ENCODE measurements at regions of chr6 and their contacts with region 1.

Region 1: GRCh38 chr6:52577022-52577777 is at the start of gene TRAM2:
- DNase-seq: peak; percentile 89
- ATAC-seq: peak; percentile 79
- H3K4me3 ChIP-seq: peak within 1 kb of the TSS; percentile 63 to 88 (median 79)
- H3K4me3 Mint-ChIP-seq: peak within 1 kb of the TSS; percentile 94
- H3K27ac ChIP-seq: peak within 1 kb of the TSS; percentile 66 to 92
- H3K27ac Mint-ChIP-seq: peak within 1 kb of the TSS; percentile 83
- H3K4me1 ChIP-seq: peaks cover 32 to 35% of the 10 kb centered on the region in 2 donors
- H3K4me1 Mint-ChIP-seq: peaks cover 46% of the 10 kb centered on the region
- H3K27me3 ChIP-seq: no peaks in the 10 kb centered on the region
- H3K27me3 Mint-ChIP-seq: no peaks in the 10 kb centered on the region
- CTCF ChIP-seq: no peak
- total RNA-seq, gene TRAM2: 13.3 and 14.0 TPM in 2 replicates

Region 2: GRCh38 chr6:52304983-52305390 is 272.2 kb before region 1 on chr6:
- CTCF ChIA-PET with region 1: no interaction called
- POLR2A ChIA-PET with region 1: no interaction called
- intact Hi-C with region 1: loop called (anchors 1 kb)
- DNase-seq: peak; percentile 73
- ATAC-seq: peak; percentile 44
- H3K4me3 ChIP-seq: peak overlapping the region in 4 of 5 experiments; percentile 0 to 44 (median 20)
- H3K4me3 Mint-ChIP-seq: peak overlapping the region; percentile 80
- H3K27ac ChIP-seq: peak overlapping the region; percentile 92 to 94
- H3K27ac Mint-ChIP-seq: peak overlapping the region; percentile 93
- H3K4me1 ChIP-seq: peaks cover 59 to 65% of the 10 kb centered on the region in 2 donors
- H3K4me1 Mint-ChIP-seq: peaks cover 62% of the 10 kb centered on the region
- H3K27me3 ChIP-seq: no peaks in the 10 kb centered on the region
- H3K27me3 Mint-ChIP-seq: no peaks in the 10 kb centered on the region
- CTCF ChIP-seq: no peak

Region 3: DNA sequence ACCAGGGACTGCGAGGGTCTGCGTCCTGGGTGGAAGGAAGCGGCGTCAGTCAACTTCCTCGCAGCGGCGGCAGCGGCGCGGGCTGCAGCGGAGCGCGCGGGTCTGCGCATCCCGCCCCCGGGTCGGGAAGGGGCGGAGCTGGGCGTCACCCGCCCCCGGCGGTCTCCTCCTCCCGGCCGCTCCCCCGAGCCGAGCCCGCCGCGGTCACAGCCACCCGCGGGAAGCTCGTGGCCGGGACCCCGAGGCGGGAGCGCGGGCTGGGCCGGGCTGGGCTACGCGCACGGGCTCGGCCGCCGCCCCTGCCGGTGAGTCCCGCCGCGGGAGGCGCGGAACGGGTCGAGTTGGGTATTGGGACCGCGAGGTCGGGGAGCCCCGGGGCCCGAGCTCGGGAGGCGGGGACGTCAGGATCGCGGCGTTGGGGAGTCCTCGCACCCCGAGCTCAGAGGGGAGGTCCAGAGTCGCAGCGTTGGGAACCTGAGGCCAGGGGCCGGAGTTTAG is 215.2 kb before region 1 on chr6 and contains the start of gene PAQR8:
- CTCF ChIA-PET with region 1: no interaction called
- POLR2A ChIA-PET with region 1: no interaction called
- intact Hi-C with region 1: loop called (anchors 2 kb)
- DNase-seq: peak; percentile 88
- ATAC-seq: peak; percentile 90
- H3K4me3 ChIP-seq: peak within 1 kb of the TSS; percentile 54 to 100 (median 91)
- H3K4me3 Mint-ChIP-seq: peak within 1 kb of the TSS; percentile 96
- H3K27ac ChIP-seq: peak within 1 kb of the TSS; percentile 76 to 86
- H3K27ac Mint-ChIP-seq: peak within 1 kb of the TSS; percentile 92
- H3K4me1 ChIP-seq: peaks cover 14 to 17% of the 10 kb centered on the region in 2 donors
- H3K4me1 Mint-ChIP-seq: peaks cover 24% of the 10 kb centered on the region
- H3K27me3 ChIP-seq: no peaks in the 10 kb centered on the region
- H3K27me3 Mint-ChIP-seq: no peaks in the 10 kb centered on the region
- CTCF ChIP-seq: peak; percentile 5
- total RNA-seq, gene PAQR8: 8.5 and 8.9 TPM in 2 replicates

Region 4: DNA sequence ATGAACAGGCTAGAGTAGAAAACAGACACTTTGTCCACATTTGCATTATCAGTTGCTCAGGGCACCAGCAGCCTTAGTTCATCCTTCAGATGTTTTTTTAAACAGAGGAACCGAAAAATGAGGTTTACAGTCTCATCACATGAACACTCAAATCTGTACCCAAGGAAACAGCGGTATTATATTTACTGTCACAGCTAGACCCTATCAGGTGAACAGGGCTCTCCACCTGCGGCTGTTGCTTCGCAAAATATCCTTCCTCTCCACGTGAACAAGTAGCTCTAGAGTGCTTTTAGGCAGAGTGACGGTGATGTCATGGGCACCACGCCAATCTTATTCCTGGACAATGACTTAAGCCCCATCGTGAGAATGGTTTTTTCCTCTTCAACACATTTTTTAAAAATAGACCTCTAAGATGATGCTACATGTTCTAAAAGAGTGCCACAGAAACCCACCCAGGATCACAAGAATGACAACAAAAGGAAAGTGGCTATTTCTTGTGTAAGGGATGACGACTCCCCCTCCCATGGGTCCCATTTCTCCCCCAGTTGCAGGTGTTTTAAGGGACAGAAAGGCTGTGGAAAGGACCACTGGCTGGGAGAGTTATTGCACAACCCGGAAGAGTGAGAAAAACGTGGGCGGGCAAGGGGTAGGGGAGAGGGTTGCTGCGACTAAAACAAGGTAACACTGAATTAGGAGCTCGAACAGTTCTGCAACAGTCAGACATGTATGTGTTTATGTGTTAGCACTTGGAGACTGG is 79.4 kb before region 1 on chr6:
- CTCF ChIA-PET with region 1: interaction called, 3 read pairs
- POLR2A ChIA-PET with region 1: interaction called, 3 read pairs
- intact Hi-C with region 1: loop called (anchors 2 kb)
- DNase-seq: peak; percentile 89
- ATAC-seq: peak; percentile 79
- H3K4me3 ChIP-seq: peak overlapping the region in 3 of 5 experiments; percentile 3 to 19 (median 7)
- H3K4me3 Mint-ChIP-seq: peak overlapping the region; percentile 76
- H3K27ac ChIP-seq: peak overlapping the region; percentile 96 to 99
- H3K27ac Mint-ChIP-seq: peak overlapping the region; percentile 96
- H3K4me1 ChIP-seq: peaks cover 43 to 61% of the 10 kb centered on the region in 2 donors
- H3K4me1 Mint-ChIP-seq: peaks cover 66% of the 10 kb centered on the region
- H3K27me3 ChIP-seq: no peaks in the 10 kb centered on the region
- H3K27me3 Mint-ChIP-seq: no peaks in the 10 kb centered on the region
- CTCF ChIP-seq: no peak

Region 5: GRCh38 chr6:52653151-52653550 is 76.0 kb after region 1 on chr6:
- CTCF ChIA-PET with region 1: interaction called, 10 read pairs
- POLR2A ChIA-PET with region 1: no interaction called
- intact Hi-C with region 1: no loop called
- DNase-seq: no peak
- ATAC-seq: no peak
- H3K4me3 ChIP-seq: no peak overlapping the region
- H3K4me3 Mint-ChIP-seq: no peak overlapping the region
- H3K27ac ChIP-seq: no peak overlapping the region
- H3K27ac Mint-ChIP-seq: no peak overlapping the region
- H3K4me1 ChIP-seq: no peaks in the 10 kb centered on the region
- H3K4me1 Mint-ChIP-seq: peaks cover 4% of the 10 kb centered on the region
- H3K27me3 ChIP-seq: peaks cover 0 to 15% (median 5%) of the 10 kb centered on the region in 4 experiments
- H3K27me3 Mint-ChIP-seq: peaks cover 22% of the 10 kb centered on the region
- CTCF ChIP-seq: no peak

Region 6: DNA sequence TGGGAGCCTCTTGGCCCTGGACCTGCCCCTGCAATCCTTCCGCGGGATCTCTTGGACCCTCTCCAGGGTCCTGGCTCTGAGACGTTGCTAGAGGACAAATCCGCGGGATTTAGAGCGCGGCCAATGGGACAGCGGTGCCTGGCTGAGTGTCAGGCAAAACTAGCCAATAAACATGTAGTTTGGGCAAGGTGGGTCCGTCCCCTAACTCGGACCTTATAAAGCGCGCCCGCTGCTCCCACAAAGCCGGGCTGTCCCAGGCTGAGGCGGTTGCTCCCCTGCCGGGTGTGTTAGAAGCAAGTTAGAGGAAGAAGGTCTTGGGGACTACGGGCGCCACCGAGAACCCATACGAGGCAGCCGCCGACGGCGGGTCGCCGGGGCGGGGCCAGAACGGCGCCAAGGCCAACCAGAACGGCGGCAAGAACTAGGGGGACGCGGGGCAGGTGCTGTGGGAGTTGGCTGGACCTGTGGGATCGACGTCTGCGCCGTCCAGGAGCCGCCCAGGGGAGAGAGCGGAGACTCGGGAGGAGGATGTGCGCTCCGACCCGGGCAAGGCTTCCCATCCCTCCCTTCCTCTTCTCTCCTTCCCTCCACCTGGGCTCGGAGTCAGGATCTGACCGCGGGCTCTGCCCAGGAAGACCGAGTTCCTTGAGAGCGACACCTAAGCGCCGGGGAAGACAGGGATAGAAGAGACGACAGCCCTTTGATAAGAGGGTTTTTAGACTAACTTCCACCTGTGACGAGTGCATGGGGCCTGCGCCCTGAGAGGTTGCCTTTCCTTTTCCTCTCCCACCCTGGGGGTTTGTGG is 87.2 kb after region 1 on chr6:
- CTCF ChIA-PET with region 1: interaction called, 6 read pairs
- POLR2A ChIA-PET with region 1: no interaction called
- intact Hi-C with region 1: loop called (anchors 2 kb)
- DNase-seq: peak; percentile 80
- ATAC-seq: peak; percentile 86
- H3K4me3 ChIP-seq: peak overlapping the region; percentile 58 to 83 (median 70)
- H3K4me3 Mint-ChIP-seq: no peak overlapping the region
- H3K27ac ChIP-seq: peak overlapping the region in 1 of 2 donors; percentile 16
- H3K27ac Mint-ChIP-seq: no peak overlapping the region
- H3K4me1 ChIP-seq: peaks cover 18 to 20% of the 10 kb centered on the region in 2 donors
- H3K4me1 Mint-ChIP-seq: peaks cover 12% of the 10 kb centered on the region
- H3K27me3 ChIP-seq: peaks cover 0 to 7% (median 0%) of the 10 kb centered on the region in 4 experiments
- H3K27me3 Mint-ChIP-seq: no peaks in the 10 kb centered on the region
- CTCF ChIP-seq: no peak

Region 7: DNA sequence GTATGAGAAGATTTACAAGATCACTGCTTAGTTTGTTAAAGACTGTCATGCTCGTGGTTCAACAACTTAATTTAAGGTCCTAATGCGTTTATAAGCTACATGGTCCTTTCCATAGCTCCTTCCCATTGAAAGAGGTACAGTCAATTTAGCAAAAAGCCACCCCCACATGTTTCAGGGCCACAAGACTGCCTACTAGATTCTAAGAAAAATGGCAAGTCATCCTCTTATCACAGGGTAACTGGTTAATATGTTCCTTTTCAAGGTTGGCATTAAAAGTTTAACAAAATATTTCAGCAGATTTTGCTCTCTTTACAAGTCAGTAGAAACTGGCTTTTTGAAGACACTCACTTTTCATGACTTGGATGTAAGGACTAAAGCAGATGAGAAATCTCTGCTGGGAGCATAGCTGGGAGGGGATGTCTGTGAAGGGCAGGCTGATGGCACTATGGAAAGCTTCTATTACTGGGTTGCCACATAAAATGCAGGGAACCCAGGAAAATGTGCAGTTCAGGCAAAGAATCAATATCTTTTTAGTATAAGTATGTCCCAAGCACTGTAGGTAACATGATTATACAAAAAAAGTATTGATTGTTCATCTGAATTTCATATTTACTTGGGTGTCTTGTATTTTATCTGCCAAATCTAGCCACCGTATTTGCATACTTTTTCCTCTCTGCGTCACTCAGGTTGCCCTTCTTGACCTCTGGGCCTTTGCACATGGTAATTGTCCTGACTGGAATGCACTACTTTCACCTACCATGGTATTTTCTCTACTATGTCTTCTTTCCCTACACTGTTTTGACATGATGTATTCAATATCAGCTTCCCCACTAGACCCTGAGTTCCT is 316.8 kb after region 1 on chr6:
- CTCF ChIA-PET with region 1: no interaction called
- POLR2A ChIA-PET with region 1: no interaction called
- intact Hi-C with region 1: no loop called
- DNase-seq: no peak
- ATAC-seq: no peak
- H3K4me3 ChIP-seq: no peak overlapping the region
- H3K4me3 Mint-ChIP-seq: no peak overlapping the region
- H3K27ac ChIP-seq: no peak overlapping the region
- H3K27ac Mint-ChIP-seq: no peak overlapping the region
- H3K4me1 ChIP-seq: no peaks in the 10 kb centered on the region
- H3K4me1 Mint-ChIP-seq: no peaks in the 10 kb centered on the region
- H3K27me3 ChIP-seq: peaks cover 0 to 2% (median 0%) of the 10 kb centered on the region in 4 experiments
- H3K27me3 Mint-ChIP-seq: peaks cover 12% of the 10 kb centered on the region
- CTCF ChIP-seq: no peak

Region 8: DNA sequence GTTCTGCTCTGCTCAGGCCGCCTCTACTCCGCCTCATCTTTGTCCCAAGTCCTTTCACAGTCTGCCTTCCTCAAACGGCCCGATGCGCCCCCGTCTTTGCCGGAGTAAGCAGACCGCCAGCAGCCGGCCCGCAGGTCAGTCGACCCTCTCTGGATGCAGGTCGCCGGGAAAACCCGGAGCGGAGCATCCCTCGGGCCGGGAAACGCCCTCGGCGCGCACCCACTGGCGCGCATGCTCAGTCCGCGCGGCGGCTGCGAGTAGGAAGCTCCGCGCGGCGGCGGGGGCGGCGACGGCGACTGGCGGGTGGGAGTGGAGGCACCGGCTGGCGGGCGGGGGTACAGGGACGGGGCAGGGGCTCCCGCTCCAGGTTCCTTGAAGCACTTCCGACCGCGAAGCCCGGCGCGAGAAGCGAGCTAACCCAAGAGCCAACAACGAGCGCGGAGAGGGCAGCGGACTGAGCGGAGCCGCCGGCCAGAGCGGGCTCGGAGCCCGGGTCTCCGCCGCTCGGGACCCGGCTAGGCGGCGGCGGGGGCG is 1217.6 kb after region 1 on chr6 and contains the start of gene LRRC1:
- CTCF ChIA-PET with region 1: no interaction called
- POLR2A ChIA-PET with region 1: no interaction called
- intact Hi-C with region 1: loop called (anchors 5 kb)
- DNase-seq: peak; percentile 93
- ATAC-seq: peak; percentile 79
- H3K4me3 ChIP-seq: peak within 1 kb of the TSS; percentile 76 to 91 (median 83)
- H3K4me3 Mint-ChIP-seq: peak within 1 kb of the TSS; percentile 95
- H3K27ac ChIP-seq: peak within 1 kb of the TSS; percentile 30 to 62
- H3K27ac Mint-ChIP-seq: peak within 1 kb of the TSS; percentile 93
- H3K4me1 ChIP-seq: peaks cover 17 to 25% of the 10 kb centered on the region in 2 donors
- H3K4me1 Mint-ChIP-seq: peaks cover 35% of the 10 kb centered on the region
- H3K27me3 ChIP-seq: peaks cover 0 to 3% (median 0%) of the 10 kb centered on the region in 4 experiments
- H3K27me3 Mint-ChIP-seq: peaks cover 6% of the 10 kb centered on the region
- CTCF ChIP-seq: no peak
- total RNA-seq, gene LRRC1: 8.9 and 12.1 TPM in 2 replicates